Activated CD4-positive, alpha-beta T cell treated with anti-CD3 and anti-CD28 coated beads, Interleukin-2, amount 10 ng/mL, durations not matched to agents 24 days and 14 days (primary cell): ENCODE measurements at regions of chr1 and their contacts with region 1.

Region 1: DNA sequence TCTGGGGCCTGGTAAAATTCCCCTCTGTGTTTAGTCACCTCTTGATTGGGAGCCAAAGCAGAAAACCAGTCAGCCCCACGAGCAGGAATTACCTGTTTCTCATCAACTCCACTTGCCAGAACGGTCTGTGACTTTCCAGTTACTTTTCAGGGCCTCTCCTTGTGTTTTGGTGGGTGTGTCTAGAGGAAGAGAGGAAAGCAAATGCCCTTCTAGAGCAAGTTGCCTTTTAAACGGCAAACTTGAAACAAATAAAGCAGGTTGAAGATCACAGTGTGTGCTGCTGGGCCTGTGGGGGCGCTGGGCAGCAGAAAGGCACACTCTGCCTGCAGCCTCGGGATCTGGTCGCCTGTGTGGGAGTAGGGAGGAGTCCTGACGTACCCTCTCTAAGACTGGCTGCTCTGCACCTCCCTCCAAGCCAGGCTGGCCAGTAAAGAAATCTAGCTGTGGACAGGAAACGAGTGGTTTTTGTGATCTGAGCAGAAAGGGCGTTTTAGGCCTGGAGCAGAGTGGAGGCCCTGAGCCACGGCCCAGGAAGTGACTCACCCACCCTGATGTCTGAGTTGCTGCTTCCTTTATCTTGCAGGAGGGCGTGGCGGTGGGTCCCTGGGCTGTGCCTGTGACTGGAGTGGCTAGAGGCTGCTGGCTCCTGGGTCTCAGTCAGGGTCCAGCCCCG is 11.1 kb upstream of the S100A11 start:
- DNase-seq: peak; percentile 95
- H3K4me3 Mint-ChIP-seq: peak overlapping the region; percentile 84
- H3K27ac Mint-ChIP-seq: peak overlapping the region; percentile 95
- H3K4me1 Mint-ChIP-seq: peaks cover 34% of the 10 kb centered on the region
- H3K27me3 Mint-ChIP-seq: peaks cover 2% of the 10 kb centered on the region

Region 2: GRCh38 chr1:152034646-152035405 is 13.0 kb before region 1 on chr1:
- intact Hi-C with region 1: loop called (anchors 1 kb)
- DNase-seq: peak; percentile 92
- H3K4me3 Mint-ChIP-seq: peak overlapping the region; percentile 98
- H3K27ac Mint-ChIP-seq: peak overlapping the region; percentile 98
- H3K4me1 Mint-ChIP-seq: peaks cover 47% of the 10 kb centered on the region
- H3K27me3 Mint-ChIP-seq: no peaks in the 10 kb centered on the region

Region 3: GRCh38 chr1:152110860-152111514 is 63.1 kb after region 1 on chr1:
- intact Hi-C with region 1: loop called (anchors 1 kb)
- DNase-seq: peak; percentile 81
- H3K4me3 Mint-ChIP-seq: no peak overlapping the region
- H3K27ac Mint-ChIP-seq: no peak overlapping the region
- H3K4me1 Mint-ChIP-seq: no peaks in the 10 kb centered on the region
- H3K27me3 Mint-ChIP-seq: peaks cover 9% of the 10 kb centered on the region

Region 4: GRCh38 chr1:152189657-152190442 is 142.0 kb after region 1 on chr1:
- intact Hi-C with region 1: loop called (anchors 1 kb)
- DNase-seq: peak; percentile 87
- H3K4me3 Mint-ChIP-seq: peak overlapping the region; percentile 62
- H3K27ac Mint-ChIP-seq: no peak overlapping the region
- H3K4me1 Mint-ChIP-seq: peaks cover 8% of the 10 kb centered on the region
- H3K27me3 Mint-ChIP-seq: peaks cover 33% of the 10 kb centered on the region

Region 5: GRCh38 chr1:152347116-152347728 is 299.4 kb after region 1 on chr1:
- intact Hi-C with region 1: loop called (anchors 5 kb)
- DNase-seq: peak; percentile 88
- H3K4me3 Mint-ChIP-seq: no peak overlapping the region
- H3K27ac Mint-ChIP-seq: no peak overlapping the region
- H3K4me1 Mint-ChIP-seq: no peaks in the 10 kb centered on the region
- H3K27me3 Mint-ChIP-seq: peaks cover 29% of the 10 kb centered on the region

Region 6: DNA sequence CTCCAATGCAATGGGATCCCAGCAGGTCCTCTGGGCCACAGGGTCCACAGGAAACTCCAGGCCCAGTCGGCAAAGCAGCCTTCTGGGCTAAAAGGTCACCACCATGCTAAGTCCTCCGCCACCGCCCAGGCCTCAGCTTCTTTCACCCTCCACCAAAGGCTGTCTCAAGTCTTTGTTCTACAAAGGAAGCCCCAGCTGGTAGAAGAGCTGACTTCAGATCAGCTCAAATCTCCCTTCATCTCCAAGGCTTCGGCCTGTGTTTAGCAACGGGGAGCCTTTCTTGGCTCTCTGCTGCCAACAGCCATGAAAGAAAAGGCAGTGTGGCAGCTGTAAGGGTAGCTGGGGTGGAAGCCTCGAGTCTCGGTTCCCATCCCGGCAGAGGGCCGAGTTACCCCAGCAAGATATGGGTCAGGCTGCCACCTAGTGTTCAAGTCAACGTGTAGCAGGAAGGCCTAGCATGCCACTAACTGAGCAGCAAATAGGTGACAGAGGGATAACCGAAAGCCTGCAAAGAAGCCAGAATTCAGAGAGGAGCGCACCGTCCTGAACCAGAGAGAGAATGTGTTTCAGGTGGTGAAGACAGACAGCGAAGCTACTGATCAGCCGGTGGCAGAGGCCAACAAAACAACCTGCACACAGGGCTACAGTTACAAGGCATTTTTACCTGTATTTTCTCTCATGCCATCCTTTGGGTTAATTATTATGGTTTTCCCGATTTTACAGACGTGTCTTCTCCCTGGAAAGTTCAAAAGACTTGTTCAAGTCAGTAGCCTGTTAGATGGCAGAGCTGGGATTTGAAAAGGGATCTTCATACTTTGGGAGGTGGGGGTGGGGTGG is 393.0 kb after region 1 on chr1:
- intact Hi-C with region 1: loop called (anchors 5 kb)
- DNase-seq: peak; percentile 89
- H3K4me3 Mint-ChIP-seq: no peak overlapping the region
- H3K27ac Mint-ChIP-seq: no peak overlapping the region
- H3K4me1 Mint-ChIP-seq: no peaks in the 10 kb centered on the region
- H3K27me3 Mint-ChIP-seq: peaks cover 22% of the 10 kb centered on the region

Region 7: GRCh38 chr1:152459596-152460528 is 412.0 kb after region 1 on chr1:
- intact Hi-C with region 1: loop called (anchors 2 kb)
- DNase-seq: peak; percentile 89
- H3K4me3 Mint-ChIP-seq: peak overlapping the region; percentile 39
- H3K27ac Mint-ChIP-seq: peak overlapping the region; percentile 75
- H3K4me1 Mint-ChIP-seq: peaks cover 23% of the 10 kb centered on the region
- H3K27me3 Mint-ChIP-seq: peaks cover 19% of the 10 kb centered on the region